Activated CD4-positive, alpha-beta T cell treated with anti-CD3 and anti-CD28 coated beads for 36 hours (primary cell): ENCODE measurements at regions of chr13 and their contacts with region 1.

Region 1: DNA sequence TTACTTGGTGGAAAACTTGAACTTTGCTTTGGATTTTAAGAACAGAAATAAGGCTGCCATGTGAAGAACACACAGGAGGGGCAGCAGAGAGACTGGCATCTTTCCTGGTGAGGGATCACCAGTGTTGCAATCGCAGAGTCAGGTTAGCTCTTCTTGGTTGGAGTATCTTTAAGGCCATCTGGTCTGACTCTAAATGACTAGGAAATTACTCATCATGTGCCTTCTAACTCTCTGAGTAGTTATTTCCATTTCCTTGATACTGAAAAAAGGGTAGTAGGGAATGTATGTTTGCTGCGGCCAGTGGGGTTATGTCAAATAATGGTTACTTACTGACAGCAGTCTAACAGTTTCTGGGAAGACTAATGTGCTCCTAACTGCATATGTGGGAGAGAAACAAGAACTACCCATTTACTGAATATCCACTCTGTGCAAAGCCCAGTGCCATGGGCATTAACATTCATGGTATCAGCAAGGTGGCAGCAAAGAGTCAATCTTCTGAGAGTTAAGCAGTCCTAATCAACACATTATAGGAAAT is 122.1 kb downstream of the COG6 start:
- DNase-seq: peak; percentile 70
- ATAC-seq: peak; percentile 83
- H3K4me3 Mint-ChIP-seq: peak overlapping the region; percentile 5
- H3K27ac Mint-ChIP-seq: peak overlapping the region; percentile 96
- H3K4me1 Mint-ChIP-seq: peaks cover 54% of the 10 kb centered on the region
- H3K27me3 Mint-ChIP-seq: no peaks in the 10 kb centered on the region

Region 2: GRCh38 chr13:39684531-39685137 is 93.0 kb before region 1 on chr13:
- CTCF ChIA-PET with region 1: interaction called, 3 read pairs
- POLR2A ChIA-PET with region 1: no interaction called
- intact Hi-C with region 1: loop called (anchors 2 kb)
- DNase-seq: no peak
- ATAC-seq: no peak
- H3K4me3 Mint-ChIP-seq: no peak overlapping the region
- H3K27ac Mint-ChIP-seq: no peak overlapping the region
- H3K4me1 Mint-ChIP-seq: peaks cover 21% of the 10 kb centered on the region
- H3K27me3 Mint-ChIP-seq: no peaks in the 10 kb centered on the region

Region 3: GRCh38 chr13:39740783-39741182 is 36.8 kb before region 1 on chr13:
- CTCF ChIA-PET with region 1: no interaction called
- POLR2A ChIA-PET with region 1: no interaction called
- intact Hi-C with region 1: no loop called
- DNase-seq: no peak
- ATAC-seq: no peak
- H3K4me3 Mint-ChIP-seq: no peak overlapping the region
- H3K27ac Mint-ChIP-seq: no peak overlapping the region
- H3K4me1 Mint-ChIP-seq: no peaks in the 10 kb centered on the region
- H3K27me3 Mint-ChIP-seq: no peaks in the 10 kb centered on the region

Region 4: DNA sequence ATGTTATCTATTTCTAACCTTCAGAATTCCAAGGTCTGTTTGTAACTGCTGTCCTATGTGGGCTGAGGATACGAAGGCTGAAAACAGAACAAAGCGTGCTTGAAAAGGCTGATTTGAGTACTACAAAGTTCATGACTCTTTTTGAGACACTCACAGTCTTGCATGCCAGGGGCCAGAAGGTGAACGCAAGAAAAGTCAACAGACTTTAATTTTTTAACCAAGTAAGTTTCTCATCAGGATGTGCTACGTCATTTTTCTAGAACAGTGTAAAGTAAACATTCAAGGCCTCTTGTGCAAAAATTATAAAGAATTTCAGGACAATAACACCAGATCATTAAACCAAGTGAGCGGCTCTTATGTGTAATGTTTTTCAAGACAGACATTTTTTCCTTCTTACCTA is 41.4 kb after region 1 on chr13:
- CTCF ChIA-PET with region 1: no interaction called
- POLR2A ChIA-PET with region 1: no interaction called
- intact Hi-C with region 1: no loop called
- DNase-seq: no peak
- ATAC-seq: no peak
- H3K4me3 Mint-ChIP-seq: no peak overlapping the region
- H3K27ac Mint-ChIP-seq: no peak overlapping the region
- H3K4me1 Mint-ChIP-seq: peaks cover 21% of the 10 kb centered on the region
- H3K27me3 Mint-ChIP-seq: no peaks in the 10 kb centered on the region

Region 5: DNA sequence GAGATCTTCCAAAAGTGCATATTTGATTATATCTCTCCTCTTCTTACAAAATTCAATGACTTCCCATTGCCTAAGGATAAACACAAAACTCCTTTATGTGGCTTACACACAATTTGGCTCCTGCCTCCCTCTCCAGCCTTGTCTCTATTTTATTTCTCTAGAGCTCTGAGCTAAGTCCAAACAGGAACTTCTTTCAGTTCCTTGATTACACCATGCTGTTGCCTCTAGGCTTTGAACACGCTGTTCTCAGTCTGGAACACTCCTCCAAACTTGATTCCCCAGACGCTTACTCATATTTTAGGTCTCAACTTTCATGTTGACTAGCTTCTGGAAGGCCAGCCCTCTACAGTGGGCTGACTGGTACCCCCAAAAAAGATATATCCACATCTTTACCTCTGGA is 136.3 kb after region 1 on chr13:
- CTCF ChIA-PET with region 1: no interaction called
- POLR2A ChIA-PET with region 1: no interaction called
- intact Hi-C with region 1: loop called (anchors 5 kb)
- DNase-seq: no peak
- ATAC-seq: no peak
- H3K4me3 Mint-ChIP-seq: no peak overlapping the region
- H3K27ac Mint-ChIP-seq: no peak overlapping the region
- H3K4me1 Mint-ChIP-seq: peaks cover 12% of the 10 kb centered on the region
- H3K27me3 Mint-ChIP-seq: peaks cover 12% of the 10 kb centered on the region

Region 6: DNA sequence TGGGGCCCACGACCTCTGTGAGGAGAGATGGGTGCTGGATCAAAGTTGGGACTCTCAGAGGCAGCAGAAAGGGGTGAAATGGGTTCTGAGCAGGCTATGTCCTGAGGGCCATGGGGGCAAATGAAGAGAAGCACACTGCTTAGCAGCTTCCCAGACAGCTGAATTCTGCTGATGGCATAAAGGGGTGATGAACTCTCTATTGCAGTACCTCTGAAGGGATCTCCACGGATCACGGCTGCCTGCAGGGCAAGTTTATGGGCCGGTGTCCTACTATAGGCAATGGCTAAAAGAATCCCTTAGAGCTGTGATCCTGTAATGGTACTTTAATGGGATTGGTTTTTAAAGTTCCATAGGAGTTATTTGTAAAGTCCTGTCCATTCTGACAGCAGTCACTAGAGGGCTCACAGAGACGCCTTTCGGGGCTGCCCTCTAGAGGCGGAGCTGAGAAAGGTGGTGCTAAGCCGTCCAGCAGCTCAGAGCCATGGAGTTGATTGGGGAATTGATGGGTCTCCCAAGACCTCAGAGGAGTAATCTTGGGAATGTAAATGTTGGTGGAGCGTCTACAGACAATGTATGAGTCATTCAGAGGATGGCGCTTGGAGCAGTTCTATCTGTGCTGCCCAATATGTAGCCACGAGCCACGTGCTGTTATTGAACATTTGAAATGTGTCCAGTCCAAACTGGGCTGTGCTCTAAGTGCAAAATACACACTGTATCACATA is 165.1 kb after region 1 on chr13:
- CTCF ChIA-PET with region 1: interaction called, 9 read pairs
- POLR2A ChIA-PET with region 1: no interaction called
- intact Hi-C with region 1: loop called (anchors 2 to 5 kb)
- DNase-seq: peak; percentile 85
- ATAC-seq: peak; percentile 98
- H3K4me3 Mint-ChIP-seq: no peak overlapping the region
- H3K27ac Mint-ChIP-seq: no peak overlapping the region
- H3K4me1 Mint-ChIP-seq: peaks cover 10% of the 10 kb centered on the region
- H3K27me3 Mint-ChIP-seq: no peaks in the 10 kb centered on the region